WTC11 (cell line): ENCODE measurements at regions of chr17 and their contacts with region 1.

Region 1: GRCh38 chr17:42312285-42313130 is 24.2 kb downstream of the STAT5A start:
- DNase-seq: peak; percentile 93
- ATAC-seq: peak; percentile 86
- H3K4me3 Mint-ChIP-seq: peak overlapping the region; percentile 38; the same call in 1 of the 2 replicates
- H3K27ac Mint-ChIP-seq: no peak overlapping the region
- H3K4me1 Mint-ChIP-seq: peaks cover 33% of the 10 kb centered on the region
- H3K27me3 Mint-ChIP-seq: no peaks in the 10 kb centered on the region
- CTCF ChIP-seq: no peak

Region 2: DNA sequence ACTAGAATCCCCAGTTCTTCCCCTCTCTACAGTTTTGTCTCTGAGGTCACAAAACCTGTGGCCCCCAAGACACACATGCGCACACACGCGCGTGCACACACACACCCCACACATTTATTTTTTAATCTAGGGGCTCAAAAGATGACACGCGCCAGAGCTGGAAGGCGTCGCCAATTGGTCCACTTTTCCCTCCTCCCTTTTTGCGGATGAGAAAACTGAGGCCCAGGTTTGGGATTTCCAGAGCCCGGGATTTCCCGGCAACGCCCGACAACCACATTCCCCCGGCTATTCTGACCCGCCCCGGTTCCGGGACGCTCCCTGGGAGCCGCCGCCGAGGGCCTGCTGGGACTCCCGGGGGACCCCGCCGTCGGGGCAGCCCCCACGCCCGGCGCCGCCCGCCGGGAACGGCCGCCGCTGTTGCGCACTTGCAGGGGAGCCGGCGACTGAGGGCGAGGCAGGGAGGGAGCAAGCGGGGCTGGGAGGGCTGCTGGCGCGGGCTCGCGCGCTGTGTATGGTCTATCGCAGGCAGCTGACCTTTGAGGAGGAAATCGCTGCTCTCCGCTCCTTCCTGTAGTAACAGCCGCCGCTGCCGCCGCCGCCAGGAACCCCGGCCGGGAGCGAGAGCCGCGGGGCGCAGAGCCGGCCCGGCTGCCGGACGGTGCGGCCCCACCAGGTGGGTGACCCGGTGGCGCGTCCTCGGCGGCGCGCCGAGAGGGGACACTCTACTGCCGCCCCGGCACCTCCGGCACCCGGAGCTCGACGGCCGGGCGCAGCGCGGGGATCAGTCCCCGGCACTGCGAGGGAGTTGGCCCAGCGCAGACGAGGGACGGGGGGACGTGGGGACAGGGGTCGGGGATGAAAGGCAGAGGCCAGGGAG is 24.3 kb before region 1 on chr17 and contains the start of gene STAT5A:
- CTCF ChIA-PET with region 1: interaction called, 13 read pairs
- POLR2A ChIA-PET with region 1: interaction called, 4 read pairs
- DNase-seq: peak; percentile 71
- ATAC-seq: peak; percentile 79
- H3K4me3 Mint-ChIP-seq: peak within 1 kb of the TSS; percentile 70
- H3K27ac Mint-ChIP-seq: peak within 1 kb of the TSS; percentile 60; the same call in 1 of the 2 replicates
- H3K4me1 Mint-ChIP-seq: peaks cover 16% of the 10 kb centered on the region
- H3K27me3 Mint-ChIP-seq: peaks cover 35% of the 10 kb centered on the region
- CTCF ChIP-seq: no peak
- total RNA-seq, gene STAT5A: 6.6 to 10.9 TPM (median 9.7 TPM) in 3 replicates

Region 3: GRCh38 chr17:42329025-42329976 is 16.8 kb after region 1 on chr17:
- CTCF ChIA-PET with region 1: interaction called, 15 read pairs
- POLR2A ChIA-PET with region 1: interaction called, 3 read pairs
- DNase-seq: peak; percentile 76
- ATAC-seq: peak; percentile 99
- H3K4me3 Mint-ChIP-seq: peak overlapping the region; percentile 38
- H3K27ac Mint-ChIP-seq: peak overlapping the region; percentile 97
- H3K4me1 Mint-ChIP-seq: peaks cover 30% of the 10 kb centered on the region
- H3K27me3 Mint-ChIP-seq: no peaks in the 10 kb centered on the region; the same call in 1 of the 2 replicates
- CTCF ChIP-seq: no peak

Region 4: GRCh38 chr17:42388381-42389134 is 76.0 kb after region 1 on chr17 and contains the start of gene STAT3:
- CTCF ChIA-PET with region 1: interaction called, 21 read pairs
- POLR2A ChIA-PET with region 1: interaction called, 3 read pairs
- DNase-seq: peak; percentile 100
- ATAC-seq: peak; percentile 97
- H3K4me3 Mint-ChIP-seq: peak within 1 kb of the TSS; percentile 94
- H3K27ac Mint-ChIP-seq: peak within 1 kb of the TSS; percentile 98
- H3K4me1 Mint-ChIP-seq: peaks cover 41% of the 10 kb centered on the region
- H3K27me3 Mint-ChIP-seq: no peaks in the 10 kb centered on the region
- CTCF ChIP-seq: no peak
- total RNA-seq, gene STAT3: 74.4 to 98.0 TPM (median 74.9 TPM) in 3 replicates

Region 5: GRCh38 chr17:42422958-42423712 is 110.6 kb after region 1 on chr17 and contains the start of gene CAVIN1:
- CTCF ChIA-PET with region 1: interaction called, 13 read pairs
- POLR2A ChIA-PET with region 1: no interaction called
- DNase-seq: peak; percentile 97
- ATAC-seq: peak; percentile 86
- H3K4me3 Mint-ChIP-seq: peak within 1 kb of the TSS; percentile 95
- H3K27ac Mint-ChIP-seq: peak within 1 kb of the TSS; percentile 93
- H3K4me1 Mint-ChIP-seq: peaks cover 31% of the 10 kb centered on the region
- H3K27me3 Mint-ChIP-seq: peaks cover 57% of the 10 kb centered on the region
- CTCF ChIP-seq: no peak
- total RNA-seq, gene CAVIN1: 24.6 to 28.4 TPM (median 27.8 TPM) in 3 replicates